ENCODE measurements at regions of chr7 and their contacts with region 1.

Region 1: DNA sequence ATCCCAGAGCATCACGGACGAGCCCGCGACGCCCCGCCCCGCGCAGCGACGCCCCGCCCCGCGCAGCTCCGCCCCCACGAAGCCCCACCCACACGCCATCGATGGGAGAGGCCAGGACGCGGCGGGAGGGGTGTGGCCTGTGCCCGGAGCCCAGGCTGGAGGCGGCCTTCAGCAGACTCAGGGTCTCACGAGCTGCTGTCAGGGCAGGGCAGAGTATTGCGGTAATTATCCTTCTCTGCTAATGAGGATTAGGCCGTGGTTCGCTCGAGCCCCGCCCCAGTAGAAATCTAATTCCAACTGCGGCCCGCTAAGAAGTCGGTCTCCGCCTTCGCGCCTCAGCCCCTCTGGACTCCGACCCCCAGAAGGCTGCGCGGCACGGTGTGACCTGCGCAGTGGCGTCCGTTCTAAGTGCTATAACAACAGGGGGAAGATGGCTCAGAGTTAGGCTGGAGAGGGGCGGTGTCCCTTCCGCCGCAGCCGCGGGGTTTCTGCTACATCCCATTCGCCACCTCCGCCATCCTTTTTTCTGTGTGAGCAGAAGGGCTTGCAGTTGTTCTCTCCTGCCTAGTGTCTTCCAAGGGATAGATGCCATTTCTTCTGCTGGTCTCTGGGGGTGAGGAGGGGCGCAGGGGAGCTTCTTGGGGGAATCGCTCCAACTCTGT is 337 bp upstream of the NT5C3A start:
- DNase-seq: peak; percentile 93
- ATAC-seq: peak; percentile 94
- H3K4me3 Mint-ChIP-seq: peak overlapping the region; percentile 95
- H3K27ac Mint-ChIP-seq: peak overlapping the region; percentile 90
- H3K4me1 Mint-ChIP-seq: peaks cover 27% of the 10 kb centered on the region
- H3K27me3 Mint-ChIP-seq: no peaks in the 10 kb centered on the region
- CTCF ChIP-seq: no peak

Region 2: GRCh38 chr7:32891800-32892520 is 171.0 kb before region 1 on chr7:
- CTCF ChIA-PET with region 1: no interaction called
- POLR2A ChIA-PET with region 1: interaction called, 20 read pairs
- intact Hi-C with region 1: no loop called
- DNase-seq: peak; percentile 99
- ATAC-seq: peak; percentile 69
- H3K4me3 Mint-ChIP-seq: peak overlapping the region; percentile 94
- H3K27ac Mint-ChIP-seq: peak overlapping the region; percentile 100
- H3K4me1 Mint-ChIP-seq: peaks cover 43% of the 10 kb centered on the region
- H3K27me3 Mint-ChIP-seq: no peaks in the 10 kb centered on the region
- CTCF ChIP-seq: no peak

Region 3: DNA sequence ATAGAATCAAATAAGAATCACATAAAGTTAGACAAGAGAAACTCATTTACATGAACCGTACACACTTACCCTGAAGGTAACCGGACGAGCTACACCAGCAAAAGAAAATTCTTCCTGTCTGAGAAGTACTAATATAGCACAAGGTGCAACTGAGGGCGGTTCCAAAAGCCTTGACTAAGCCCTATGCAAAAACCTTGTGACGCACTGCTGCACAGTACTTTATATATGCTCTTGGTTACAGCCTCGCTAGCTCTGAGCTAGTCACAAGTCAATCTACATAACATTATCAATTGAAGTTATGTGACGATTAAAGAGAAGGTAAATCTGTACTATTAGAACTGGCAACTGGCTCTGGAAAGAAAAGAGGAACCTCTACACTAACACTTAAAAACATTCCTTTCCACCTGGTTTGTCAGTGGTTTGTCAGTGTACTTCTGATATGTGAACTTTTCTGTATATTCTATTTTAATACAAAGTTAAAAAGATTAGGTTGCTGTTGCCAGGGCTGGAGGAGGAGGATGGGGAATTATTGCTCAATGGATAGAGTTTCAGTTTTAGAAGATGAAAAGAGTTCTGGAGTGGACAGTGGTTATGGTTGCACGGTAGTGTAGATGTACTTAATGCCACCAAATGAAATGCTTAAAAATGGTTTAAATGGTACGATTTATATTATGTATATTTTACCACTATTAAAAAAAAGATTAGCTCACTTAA is 22.0 kb before region 1 on chr7:
- CTCF ChIA-PET with region 1: interaction called, 5 read pairs
- POLR2A ChIA-PET with region 1: interaction called, 14 read pairs
- intact Hi-C with region 1: no loop called
- DNase-seq: peak; percentile 82
- ATAC-seq: peak; percentile 99
- H3K4me3 Mint-ChIP-seq: peak overlapping the region; percentile 64
- H3K27ac Mint-ChIP-seq: peak overlapping the region; percentile 79
- H3K4me1 Mint-ChIP-seq: peaks cover 52% of the 10 kb centered on the region
- H3K27me3 Mint-ChIP-seq: no peaks in the 10 kb centered on the region
- CTCF ChIP-seq: no peak

Region 4: DNA sequence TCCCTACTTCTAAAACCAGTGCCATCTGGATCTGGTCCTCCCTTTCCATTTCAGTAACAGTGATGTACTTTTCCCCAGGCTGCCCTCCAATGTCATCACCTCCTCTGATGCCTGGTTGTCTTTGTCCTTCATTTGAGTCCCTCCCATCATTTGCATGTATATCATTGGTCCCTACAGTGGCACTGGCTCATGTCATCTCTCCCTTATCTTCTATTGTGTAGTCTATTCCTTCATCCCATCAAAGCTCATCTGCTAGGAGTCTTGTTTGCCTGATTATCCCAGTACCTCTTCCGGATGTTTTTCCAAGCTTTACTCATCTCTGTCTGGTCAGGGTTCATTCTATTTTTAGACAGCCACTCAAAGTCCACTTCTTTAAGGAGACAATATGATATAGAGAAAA is 549.5 kb after region 1 on chr7:
- CTCF ChIA-PET with region 1: no interaction called
- POLR2A ChIA-PET with region 1: no interaction called
- intact Hi-C with region 1: no loop called
- DNase-seq: no peak
- ATAC-seq: no peak
- H3K4me3 Mint-ChIP-seq: no peak overlapping the region
- H3K27ac Mint-ChIP-seq: no peak overlapping the region
- H3K4me1 Mint-ChIP-seq: no peaks in the 10 kb centered on the region
- H3K27me3 Mint-ChIP-seq: no peaks in the 10 kb centered on the region
- CTCF ChIP-seq: no peak